HEK293 (cell line): ENCODE measurements at regions of chr10 and their contacts with region 1.

Region 1: GRCh38 chr10:34994565-34995142 is 95.5 kb downstream of the CUL2 start:
- H3K4me3 ChIP-seq: no peak overlapping the region
- H3K27ac ChIP-seq: no peak overlapping the region
- H3K4me1 ChIP-seq: no peaks in the 10 kb centered on the region
- CTCF ChIP-seq: peak; percentile 58

Region 2: DNA sequence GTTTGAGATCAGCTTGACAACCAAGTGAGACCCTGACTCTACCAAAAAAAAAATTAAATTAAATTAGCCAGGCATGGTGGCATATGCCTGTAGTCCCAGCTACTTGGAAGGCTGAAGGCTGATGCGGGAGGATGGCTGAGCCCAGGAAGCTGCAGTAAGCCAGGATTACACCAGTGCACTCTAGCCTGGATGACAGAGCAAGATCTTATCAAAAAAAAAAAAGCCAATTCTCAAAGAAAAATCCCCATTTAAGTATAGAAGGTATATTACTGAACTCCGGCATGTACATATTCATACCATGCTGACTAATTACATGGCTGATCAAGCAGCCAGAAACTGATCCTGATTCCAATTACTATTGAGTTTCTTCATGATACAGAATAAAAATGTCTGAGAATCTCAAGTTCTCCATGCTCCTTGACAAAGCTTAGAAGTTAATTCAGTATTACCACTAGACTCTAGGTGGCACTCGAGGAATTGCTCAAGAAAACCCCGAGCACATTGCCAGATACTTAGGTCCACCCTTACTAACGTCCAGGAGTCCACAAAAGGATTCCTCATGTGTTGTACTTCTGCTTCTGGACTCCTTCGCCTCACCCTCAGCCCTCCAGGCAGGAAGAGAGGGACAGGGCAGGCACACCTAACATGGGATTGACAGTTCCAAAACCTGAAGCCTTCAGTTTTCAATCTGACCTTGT is 328.5 kb before region 1 on chr10:
- CTCF ChIA-PET with region 1: interaction called, 11 read pairs
- POLR2A ChIA-PET with region 1: no interaction called
- H3K4me3 ChIP-seq: no peak overlapping the region
- H3K27ac ChIP-seq: no peak overlapping the region
- H3K4me1 ChIP-seq: peaks cover 6% of the 10 kb centered on the region
- CTCF ChIP-seq: no peak; the same call in 1 of the 2 replicates

Region 3: DNA sequence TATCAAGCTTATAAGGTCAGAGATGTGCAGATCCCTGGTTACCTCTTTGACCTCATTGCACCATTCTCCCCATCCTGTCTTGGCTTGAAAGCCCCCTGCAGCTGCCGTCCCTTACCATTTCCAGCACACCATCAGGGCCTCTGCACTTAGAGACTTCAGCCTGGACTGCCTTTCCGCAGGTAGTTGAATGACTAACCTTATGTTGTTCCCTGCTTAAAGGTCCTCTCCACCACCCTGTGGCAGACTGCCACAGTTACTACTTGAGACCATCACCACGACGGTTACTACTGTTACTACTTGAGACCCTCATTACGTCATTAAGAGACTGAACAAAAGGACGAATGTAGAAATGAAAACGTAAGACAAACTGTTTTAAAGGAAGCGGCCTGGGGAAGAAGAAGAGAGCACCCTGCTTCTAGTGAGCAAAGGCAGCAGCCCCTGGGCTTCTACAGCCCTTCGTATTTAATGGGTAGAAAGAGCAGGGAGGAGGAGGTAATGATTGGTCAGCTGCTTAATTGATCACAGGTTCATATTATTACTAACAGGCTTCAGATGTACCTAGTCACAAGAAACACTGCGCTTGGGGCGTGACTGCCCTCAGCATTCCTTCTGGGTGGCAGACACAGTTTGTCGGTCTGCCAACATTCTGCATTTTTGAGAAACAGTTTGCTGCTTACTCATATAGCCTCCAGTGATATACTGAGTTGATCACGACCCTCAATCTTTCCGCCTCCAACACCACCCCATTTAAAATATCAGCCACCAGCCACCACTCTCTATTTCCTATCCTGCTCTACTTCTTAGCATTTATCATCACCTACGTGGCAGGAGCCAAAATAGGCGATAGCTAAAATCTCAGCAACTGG is 105.4 kb before region 1 on chr10:
- CTCF ChIA-PET with region 1: no interaction called
- POLR2A ChIA-PET with region 1: no interaction called
- H3K4me3 ChIP-seq: no peak overlapping the region
- H3K27ac ChIP-seq: no peak overlapping the region
- H3K4me1 ChIP-seq: peaks cover 5% of the 10 kb centered on the region; the same call in 1 of the 2 replicates
- CTCF ChIP-seq: no peak

Region 4: GRCh38 chr10:34931223-34931622 is 63.4 kb before region 1 on chr10:
- CTCF ChIA-PET with region 1: no interaction called
- POLR2A ChIA-PET with region 1: no interaction called
- H3K4me3 ChIP-seq: no peak overlapping the region
- H3K27ac ChIP-seq: no peak overlapping the region
- H3K4me1 ChIP-seq: no peaks in the 10 kb centered on the region
- CTCF ChIP-seq: no peak

Region 5: DNA sequence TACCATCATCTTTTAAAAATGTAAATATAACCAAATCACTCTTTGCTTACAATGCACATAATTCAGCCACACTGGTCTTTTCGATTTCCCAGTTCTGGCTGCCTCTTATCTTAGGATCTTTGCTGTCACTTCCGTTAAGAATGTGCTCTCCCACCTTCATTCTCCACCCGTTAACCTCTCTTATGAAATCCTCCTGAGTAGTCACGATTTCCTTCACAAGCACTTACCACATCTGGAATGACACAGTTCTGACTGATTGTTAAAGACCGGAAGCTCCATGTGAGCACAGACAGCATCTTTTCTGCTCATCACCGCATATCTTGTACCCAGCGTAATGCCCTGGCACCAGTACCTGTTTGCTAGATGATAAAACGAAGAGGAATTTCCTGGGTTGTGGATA is 11.2 kb after region 1 on chr10:
- CTCF ChIA-PET with region 1: interaction called, 12 read pairs
- POLR2A ChIA-PET with region 1: no interaction called
- H3K4me3 ChIP-seq: no peak overlapping the region
- H3K27ac ChIP-seq: no peak overlapping the region
- H3K4me1 ChIP-seq: no peaks in the 10 kb centered on the region
- CTCF ChIP-seq: no peak

Region 6: DNA sequence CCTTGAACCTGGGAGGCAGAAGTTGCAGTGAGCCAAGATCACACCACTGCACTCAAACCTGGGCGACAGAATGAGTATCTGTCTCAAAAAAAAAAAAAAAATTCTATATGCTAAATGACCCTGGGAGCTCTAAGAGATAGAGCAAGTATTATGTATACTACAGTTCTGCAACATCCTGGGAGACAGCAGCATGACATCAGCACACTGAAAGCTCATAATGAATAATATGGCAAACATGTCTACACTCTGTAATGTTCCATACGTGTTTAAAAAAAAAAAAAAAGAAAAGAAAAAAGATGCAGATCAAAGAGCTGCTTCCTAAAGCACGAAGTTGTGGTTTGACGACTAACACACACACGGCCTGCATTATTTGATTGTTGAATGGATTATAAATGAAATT is 23.0 kb after region 1 on chr10:
- CTCF ChIA-PET with region 1: interaction called, 10 read pairs
- POLR2A ChIA-PET with region 1: interaction called, 3 read pairs
- H3K4me3 ChIP-seq: no peak overlapping the region
- H3K27ac ChIP-seq: no peak overlapping the region
- H3K4me1 ChIP-seq: no peaks in the 10 kb centered on the region
- CTCF ChIP-seq: no peak

Region 7: GRCh38 chr10:35027567-35027966 is 32.9 kb after region 1 on chr10:
- CTCF ChIA-PET with region 1: interaction called, 21 read pairs
- POLR2A ChIA-PET with region 1: no interaction called
- H3K4me3 ChIP-seq: no peak overlapping the region
- H3K27ac ChIP-seq: no peak overlapping the region
- H3K4me1 ChIP-seq: no peaks in the 10 kb centered on the region
- CTCF ChIP-seq: no peak

Region 8: GRCh38 chr10:35126530-35127296 is 132.1 kb after region 1 on chr10 and contains the start of gene CREM:
- CTCF ChIA-PET with region 1: interaction called, 10 read pairs
- POLR2A ChIA-PET with region 1: no interaction called
- H3K4me3 ChIP-seq: peak within 1 kb of the TSS; percentile 76
- H3K27ac ChIP-seq: peak within 1 kb of the TSS; percentile 97
- H3K4me1 ChIP-seq: peaks cover 11% of the 10 kb centered on the region
- CTCF ChIP-seq: peak; percentile 89